ENCODE measurements at regions of chr20 and their contacts with region 1.

Region 1: DNA sequence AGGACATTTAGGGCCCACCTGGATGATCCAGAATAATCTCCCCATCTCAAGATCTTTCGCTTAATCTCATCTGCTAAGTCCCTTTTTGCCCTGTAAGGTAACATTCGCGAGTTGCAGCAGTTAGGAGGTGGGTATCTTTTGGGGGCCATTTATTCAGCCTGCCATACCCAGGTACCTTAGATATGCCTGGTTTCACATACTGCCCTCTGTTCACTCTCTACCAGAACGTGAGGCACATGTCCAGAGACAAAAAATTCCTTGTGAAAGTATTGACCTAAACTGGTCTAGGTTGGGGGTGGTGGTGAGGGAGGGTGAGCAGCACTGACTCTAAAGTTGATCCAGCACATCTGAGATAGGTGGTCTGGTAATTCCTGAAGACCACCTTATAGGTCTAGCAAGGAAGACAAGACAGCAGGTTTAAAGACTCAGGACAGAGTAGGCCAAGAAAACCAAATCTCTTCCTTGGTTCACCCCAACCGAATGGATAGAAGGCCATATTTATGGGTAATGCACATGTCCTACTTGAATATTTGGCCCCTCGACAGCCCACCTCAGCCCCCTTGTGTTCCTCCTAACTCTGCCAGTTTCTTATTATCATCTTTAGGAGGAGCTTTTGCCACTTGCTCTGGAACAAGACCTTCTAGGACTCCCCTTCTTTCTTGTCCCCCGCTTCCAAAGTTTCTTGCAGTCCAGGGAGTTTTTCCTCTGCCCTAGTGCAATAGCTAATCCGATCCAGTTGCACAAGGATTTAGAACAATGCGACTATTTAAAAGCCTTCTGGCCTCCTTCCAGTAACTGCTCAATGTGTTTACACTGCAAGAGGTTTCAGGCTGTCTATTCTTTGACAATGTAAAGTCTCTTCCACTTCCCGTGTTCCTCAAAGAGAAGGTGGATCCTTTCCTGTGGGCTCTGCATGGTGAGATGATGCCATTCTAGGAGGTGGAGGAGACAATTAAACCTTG is 213.0 kb upstream of the LAMP5 start:
- DNase-seq: peak; percentile 93
- ATAC-seq: peak; percentile 81
- H3K4me3 ChIP-seq: no peak overlapping the region
- H3K27ac ChIP-seq: peak overlapping the region; percentile 44
- H3K4me1 ChIP-seq: peaks cover 34% of the 10 kb centered on the region
- H3K27me3 ChIP-seq: no peaks in the 10 kb centered on the region
- CTCF ChIP-seq: no peak

Region 2: DNA sequence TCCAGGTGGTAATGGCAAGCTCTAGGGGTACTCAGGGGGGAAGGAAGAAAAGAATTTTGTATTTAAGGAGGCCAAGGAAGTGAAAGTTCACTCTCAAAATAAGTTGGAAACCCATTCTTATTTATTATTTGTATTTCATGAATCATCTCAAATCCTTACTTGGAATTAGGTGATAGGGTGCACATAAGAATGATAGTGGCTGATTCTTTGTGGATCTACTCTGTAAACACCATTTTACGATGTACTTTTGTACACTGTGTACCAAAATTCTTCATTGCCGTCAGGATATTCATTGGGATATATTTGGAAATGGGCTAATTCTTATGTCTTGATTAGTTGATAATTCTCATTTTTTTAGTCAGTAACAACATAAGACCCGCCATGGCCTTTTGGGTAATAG is 33.5 kb after region 1 on chr20:
- CTCF ChIA-PET with region 1: no interaction called
- POLR2A ChIA-PET with region 1: no interaction called
- intact Hi-C with region 1: loop called (anchors 2 kb)
- DNase-seq: peak; percentile 73
- ATAC-seq: peak; percentile 88
- H3K4me3 ChIP-seq: no peak overlapping the region
- H3K27ac ChIP-seq: peak overlapping the region; percentile 46
- H3K4me1 ChIP-seq: peaks cover 40% of the 10 kb centered on the region
- H3K27me3 ChIP-seq: no peaks in the 10 kb centered on the region
- CTCF ChIP-seq: no peak

Measured in PC-3 (cell line).